Activated CD4-positive, alpha-beta T cell treated with anti-CD3 and anti-CD28 coated beads for 36 hours (primary cell): ENCODE measurements at regions of chr2 and their contacts with region 1.

Region 1: GRCh38 chr2:9630749-9631483 is at the start of gene YWHAQ:
- DNase-seq: peak; percentile 97
- ATAC-seq: peak; percentile 89
- H3K4me3 Mint-ChIP-seq: peak within 1 kb of the TSS; percentile 99
- H3K27ac Mint-ChIP-seq: peak within 1 kb of the TSS; percentile 95
- H3K4me1 Mint-ChIP-seq: peaks cover 45% of the 10 kb centered on the region
- H3K27me3 Mint-ChIP-seq: no peaks in the 10 kb centered on the region
- total RNA-seq, gene YWHAQ: 370 to 508 TPM

Region 2: GRCh38 chr2:9003616-9004337 is 627.1 kb before region 1 on chr2 and contains the start of gene MBOAT2:
- CTCF ChIA-PET with region 1: no interaction called
- POLR2A ChIA-PET with region 1: no interaction called
- intact Hi-C with region 1: loop called in 1 of 2 experiments (anchors 5 kb)
- DNase-seq: peak; percentile 89
- ATAC-seq: peak; percentile 96
- H3K4me3 Mint-ChIP-seq: peak within 1 kb of the TSS; percentile 75
- H3K27ac Mint-ChIP-seq: peak within 1 kb of the TSS; percentile 64
- H3K4me1 Mint-ChIP-seq: peaks cover 11% of the 10 kb centered on the region
- H3K27me3 Mint-ChIP-seq: peaks cover 6% of the 10 kb centered on the region
- total RNA-seq, gene MBOAT2: 4.7 to 6.9 TPM

Region 3: GRCh38 chr2:9594366-9595054 is 36.4 kb before region 1 on chr2:
- CTCF ChIA-PET with region 1: interaction called, 4 read pairs
- POLR2A ChIA-PET with region 1: interaction called, 21 read pairs
- intact Hi-C with region 1: loop called (anchors 1 kb)
- DNase-seq: peak; percentile 21
- ATAC-seq: peak; percentile 89
- H3K4me3 Mint-ChIP-seq: no peak overlapping the region
- H3K27ac Mint-ChIP-seq: peak overlapping the region; percentile 82
- H3K4me1 Mint-ChIP-seq: peaks cover 83% of the 10 kb centered on the region
- H3K27me3 Mint-ChIP-seq: no peaks in the 10 kb centered on the region

Region 4: GRCh38 chr2:9641641-9642040 is 10.7 kb after region 1 on chr2:
- CTCF ChIA-PET with region 1: no interaction called
- POLR2A ChIA-PET with region 1: interaction called, 3 read pairs
- intact Hi-C with region 1: loop called in 1 of 2 experiments (anchors 1 kb)
- DNase-seq: peak; percentile 63
- ATAC-seq: peak; percentile 88
- H3K4me3 Mint-ChIP-seq: no peak overlapping the region
- H3K27ac Mint-ChIP-seq: no peak overlapping the region
- H3K4me1 Mint-ChIP-seq: peaks cover 21% of the 10 kb centered on the region
- H3K27me3 Mint-ChIP-seq: peaks cover 2% of the 10 kb centered on the region

Region 5: GRCh38 chr2:9663008-9663879 is 32.3 kb after region 1 on chr2:
- CTCF ChIA-PET with region 1: no interaction called
- POLR2A ChIA-PET with region 1: no interaction called
- intact Hi-C with region 1: no loop called
- DNase-seq: no peak
- ATAC-seq: peak; percentile 49
- H3K4me3 Mint-ChIP-seq: no peak overlapping the region
- H3K27ac Mint-ChIP-seq: no peak overlapping the region
- H3K4me1 Mint-ChIP-seq: peaks cover 6% of the 10 kb centered on the region
- H3K27me3 Mint-ChIP-seq: no peaks in the 10 kb centered on the region

Region 6: GRCh38 chr2:9708683-9709538 is 78.0 kb after region 1 on chr2:
- CTCF ChIA-PET with region 1: no interaction called
- POLR2A ChIA-PET with region 1: interaction called, 5 read pairs
- intact Hi-C with region 1: loop called in 1 of 2 experiments (anchors 1 kb)
- DNase-seq: peak; percentile 71
- ATAC-seq: peak; percentile 63
- H3K4me3 Mint-ChIP-seq: peak overlapping the region; percentile 10
- H3K27ac Mint-ChIP-seq: peak overlapping the region; percentile 92
- H3K4me1 Mint-ChIP-seq: peaks cover 56% of the 10 kb centered on the region
- H3K27me3 Mint-ChIP-seq: no peaks in the 10 kb centered on the region

Region 7: DNA sequence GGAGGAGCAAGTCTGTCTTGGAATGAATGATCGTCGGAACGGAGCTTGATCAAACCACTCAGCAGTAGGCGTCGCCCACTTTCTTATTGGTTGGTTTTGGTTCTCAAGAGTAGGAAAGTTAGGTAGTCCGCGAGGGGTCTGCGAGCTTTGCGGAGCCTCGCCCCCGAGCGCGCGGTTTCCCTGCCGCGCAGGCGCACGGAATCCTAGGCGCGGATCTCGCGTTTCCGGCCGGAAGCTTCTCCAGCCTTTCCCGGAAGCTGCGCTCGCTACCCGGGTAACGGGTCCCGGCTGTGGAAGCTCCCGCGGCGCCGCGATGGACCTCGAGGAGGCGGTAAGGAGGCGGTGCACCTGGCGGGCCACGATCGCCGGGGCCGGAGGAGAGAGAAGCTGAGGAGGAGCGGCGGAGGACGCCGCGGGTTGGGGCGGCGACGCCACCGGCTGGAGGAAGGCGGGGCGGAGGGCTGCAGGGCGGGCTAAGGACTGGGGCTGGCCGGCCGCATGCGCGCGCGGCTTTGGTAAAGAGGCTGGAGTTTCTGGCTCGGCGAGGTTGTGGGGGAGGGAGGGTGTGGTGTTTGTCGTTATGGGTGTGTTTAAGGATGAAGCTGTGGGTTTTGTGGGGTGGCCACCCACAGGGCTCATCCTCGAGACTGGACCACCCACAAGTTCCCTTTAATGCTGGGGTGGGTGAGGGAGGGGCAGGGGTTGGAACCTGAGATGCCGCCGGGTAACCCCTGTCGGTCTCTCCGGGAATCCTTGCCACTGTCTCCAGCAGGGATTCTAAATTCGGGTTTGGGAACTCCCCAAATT is 212.5 kb after region 1 on chr2 and contains the start of gene TAF1B:
- CTCF ChIA-PET with region 1: no interaction called
- POLR2A ChIA-PET with region 1: interaction called, 4 read pairs
- intact Hi-C with region 1: loop called in 1 of 2 experiments (anchors 1 kb)
- DNase-seq: peak; percentile 93
- ATAC-seq: peak; percentile 80
- H3K4me3 Mint-ChIP-seq: peak within 1 kb of the TSS; percentile 89
- H3K27ac Mint-ChIP-seq: peak within 1 kb of the TSS; percentile 85
- H3K4me1 Mint-ChIP-seq: peaks cover 37% of the 10 kb centered on the region
- H3K27me3 Mint-ChIP-seq: no peaks in the 10 kb centered on the region
- total RNA-seq, gene TAF1B: 28.7 to 28.8 TPM